Dorsolateral prefrontal cortex (tissue), 120 donors: ENCODE measurements at regions of chr2 and their contacts with region 1.

Region 1: DNA sequence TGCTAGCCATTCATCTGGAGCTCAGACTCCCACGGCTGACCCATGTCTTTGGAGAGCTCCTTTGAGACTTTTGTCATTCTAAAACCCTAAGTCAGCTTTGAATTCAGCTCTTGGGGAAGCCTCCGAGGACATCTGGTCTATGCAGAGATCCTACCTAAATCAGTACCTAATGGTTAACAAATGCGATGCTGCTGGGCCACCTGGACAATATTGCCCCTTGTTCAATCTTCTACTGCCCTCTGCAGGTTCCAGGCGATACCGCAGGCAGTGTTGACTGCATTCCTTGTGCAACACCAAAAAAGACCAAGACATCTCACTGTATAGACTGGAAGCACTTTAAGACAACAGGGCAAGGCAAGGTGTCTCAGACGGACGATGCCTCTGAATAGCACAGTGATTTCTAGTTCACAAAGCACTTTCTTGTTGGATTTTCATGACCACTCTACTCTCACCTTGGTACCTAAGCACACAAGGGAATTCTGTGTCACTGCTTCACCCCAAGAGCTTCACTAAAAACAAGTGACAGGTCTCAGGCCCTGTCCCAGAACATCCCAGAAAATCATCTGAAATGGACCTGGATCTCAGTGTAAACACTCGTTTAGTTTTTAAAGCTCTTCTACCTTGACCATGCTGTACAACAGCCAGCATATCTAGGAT is 80.9 kb downstream of the XDH start:
- DNase-seq: peak; percentile 69 to 90 (median 80)
- H3K4me3 ChIP-seq: no peak overlapping the region
- H3K27ac ChIP-seq: peak overlapping the region in 1 of 59 donors; percentile 13
- H3K27me3 ChIP-seq: peaks cover 0 to 6% (median 0%) of the 10 kb centered on the region in 45 donors
- CTCF ChIP-seq: peak; percentile 75 to 98 (median 95)

Region 2: GRCh38 chr2:30165050-30165520 is 1168.6 kb before region 1 on chr2:
- intact Hi-C with region 1: loop called in 1 of 2 experiments (anchors 10 kb)
- DNase-seq: peak in 6 of 10 donors; percentile 26 to 73 (median 41)
- H3K4me3 ChIP-seq: no peak overlapping the region
- H3K27ac ChIP-seq: no peak overlapping the region
- H3K27me3 ChIP-seq: no peaks in the 10 kb centered on the region
- CTCF ChIP-seq: peak; percentile 88 to 97 (median 94)

Region 3: GRCh38 chr2:30862054-30862651 is 471.5 kb before region 1 on chr2:
- intact Hi-C with region 1: loop called in 1 of 2 experiments (anchors 5 kb)
- DNase-seq: peak in 7 of 10 donors; percentile 25 to 72 (median 55)
- H3K4me3 ChIP-seq: no peak overlapping the region
- H3K27ac ChIP-seq: peak overlapping the region in 26 of 59 donors; percentile 2 to 72 (median 30)
- H3K27me3 ChIP-seq: no peaks in the 10 kb centered on the region
- CTCF ChIP-seq: peak; percentile 55 to 94 (median 82)

Region 4: DNA sequence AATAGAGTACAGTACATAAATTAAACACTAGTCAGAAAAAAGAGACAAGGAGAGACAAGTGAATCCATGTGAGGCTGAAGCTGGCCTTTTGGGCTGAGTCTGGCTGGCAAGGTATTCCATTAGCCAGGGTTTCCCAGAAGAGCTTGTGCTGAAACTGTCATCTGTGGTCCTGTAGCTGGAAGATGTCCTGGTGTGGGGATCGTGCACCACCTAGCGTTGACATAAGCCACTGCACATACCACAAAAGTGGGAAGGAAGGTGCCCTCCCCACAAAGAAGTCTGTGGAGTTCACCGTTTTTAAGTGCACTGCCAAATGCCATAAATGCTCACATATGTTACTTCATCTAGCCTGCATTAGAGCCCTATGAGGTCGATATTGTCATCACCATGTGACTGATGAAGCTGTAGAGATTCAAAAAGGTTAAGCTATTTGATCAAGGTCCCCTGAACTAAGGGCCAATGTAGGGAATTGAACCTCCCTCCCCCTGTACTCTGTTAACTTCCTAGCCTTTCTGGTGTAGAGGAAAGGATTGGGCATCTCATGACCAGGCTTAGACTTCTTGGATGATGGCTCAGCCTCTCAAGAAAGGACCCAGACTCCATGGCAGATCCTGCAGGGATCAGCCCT is 163.5 kb before region 1 on chr2:
- intact Hi-C with region 1: loop called in 1 of 2 experiments (anchors 5 kb)
- DNase-seq: peak; percentile 49 to 81 (median 66)
- H3K4me3 ChIP-seq: no peak overlapping the region
- H3K27ac ChIP-seq: no peak overlapping the region
- H3K27me3 ChIP-seq: peaks cover 0 to 17% (median 0%) of the 10 kb centered on the region in 45 donors
- CTCF ChIP-seq: peak; percentile 68 to 97 (median 93)

Region 5: DNA sequence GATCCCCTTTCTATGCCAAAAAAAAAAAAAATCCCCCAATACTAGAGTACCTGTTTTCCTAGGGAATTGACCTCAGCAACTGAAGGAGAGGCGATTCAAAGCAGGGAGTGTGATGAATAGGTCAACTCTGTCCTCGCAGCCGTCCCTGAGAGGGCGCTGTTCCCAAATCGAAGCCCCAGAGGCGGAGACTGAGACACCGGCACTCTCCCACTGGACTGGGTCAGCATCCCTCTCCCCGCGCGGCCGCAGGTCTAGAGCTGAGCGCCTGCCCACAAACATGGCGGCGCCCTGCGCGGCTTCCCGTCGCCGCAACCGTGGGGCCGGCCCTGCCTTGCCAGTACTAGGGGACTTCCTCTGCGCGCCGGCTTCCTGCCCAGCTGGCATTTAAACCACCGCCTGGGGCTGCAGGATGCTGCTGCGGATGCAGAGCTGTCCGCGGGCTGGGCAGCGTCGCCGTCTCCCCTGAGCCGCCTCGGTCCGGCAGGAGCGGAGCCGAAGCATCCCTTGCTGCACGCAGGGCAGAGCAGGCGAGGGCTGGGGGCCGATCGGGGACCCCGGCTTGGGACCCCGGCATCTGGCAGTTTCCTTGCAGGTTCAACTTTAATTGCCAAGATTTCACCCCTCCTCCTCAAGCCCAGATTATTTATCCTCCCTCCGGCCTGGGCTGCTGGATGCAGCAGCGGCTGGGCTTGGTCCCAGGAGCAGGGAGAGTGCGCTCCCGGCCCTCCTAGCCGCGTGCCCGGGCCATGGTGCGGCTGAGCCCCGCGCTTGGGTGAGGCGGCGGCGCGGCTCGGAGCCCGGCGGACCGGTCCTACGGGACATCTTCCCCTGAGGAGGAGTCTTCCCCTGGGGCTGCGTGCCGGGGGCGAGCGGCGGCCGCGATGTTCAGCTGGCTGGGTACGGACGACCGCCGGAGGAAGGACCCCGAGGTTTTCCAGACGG is 99.6 kb before region 1 on chr2 and contains the start of gene EHD3:
- intact Hi-C with region 1: loop called (anchors 2 kb)
- DNase-seq: peak; percentile 82 to 97 (median 92)
- H3K4me3 ChIP-seq: peak within 1 kb of the TSS; percentile 58 to 92 (median 80)
- H3K27ac ChIP-seq: peak within 1 kb of the TSS; percentile 18 to 94 (median 86)
- H3K27me3 ChIP-seq: no peaks in the 10 kb centered on the region
- CTCF ChIP-seq: peak; percentile 52 to 92 (median 76)
- total RNA-seq, gene EHD3: 35.8 to 122 (median 93.2) TPM

Region 6: DNA sequence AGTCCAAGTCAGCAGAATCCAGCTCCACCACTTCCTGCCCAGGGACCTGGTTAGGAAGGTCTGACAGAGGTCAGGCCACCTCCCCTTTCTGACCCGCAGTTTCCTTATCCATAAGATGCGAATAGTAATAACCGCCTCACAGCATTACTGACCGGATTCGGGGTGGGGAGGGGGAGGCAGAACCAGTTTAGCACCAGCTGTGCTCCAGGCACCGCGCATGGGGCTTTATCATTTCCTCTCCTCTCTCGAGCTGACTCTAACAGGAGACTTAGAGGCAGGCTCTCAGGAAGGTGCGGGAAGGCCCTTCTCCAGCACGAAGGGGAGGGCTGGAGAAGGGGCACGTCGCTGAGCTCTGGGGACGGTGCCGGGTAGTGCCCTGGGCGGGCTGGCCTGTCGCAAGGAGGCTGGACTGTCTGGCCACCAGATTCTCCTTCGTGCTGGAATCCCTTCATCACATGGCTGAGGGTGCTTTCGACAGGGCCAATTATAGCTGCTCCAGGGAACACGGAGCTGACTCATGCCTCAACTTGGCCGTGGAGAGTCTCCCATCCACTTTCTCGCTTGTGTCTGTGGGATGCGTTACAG is 94.0 kb before region 1 on chr2:
- intact Hi-C with region 1: loop called in 1 of 2 experiments (anchors 2 kb)
- DNase-seq: peak in 7 of 10 donors; percentile 49 to 87 (median 74)
- H3K4me3 ChIP-seq: peak overlapping the region in 29 of 59 donors; percentile 4 to 82 (median 28)
- H3K27ac ChIP-seq: peak overlapping the region; percentile 18 to 93 (median 79)
- H3K27me3 ChIP-seq: no peaks in the 10 kb centered on the region
- CTCF ChIP-seq: no peak